Calu3 (cell line): ENCODE measurements at regions of chr12 and their contacts with region 1.

Region 1: GRCh38 chr12:43762596-43762995 is 3.8 kb downstream of the IRAK4 start:
- DNase-seq: no peak
- H3K4me3 Mint-ChIP-seq: no peak overlapping the region
- H3K27ac Mint-ChIP-seq: no peak overlapping the region
- H3K4me1 Mint-ChIP-seq: peaks cover 18% of the 10 kb centered on the region
- H3K27me3 Mint-ChIP-seq: no peaks in the 10 kb centered on the region
- CTCF ChIP-seq: no peak

Region 2: GRCh38 chr12:43795716-43796288 is 33.2 kb after region 1 on chr12:
- CTCF ChIA-PET with region 1: no interaction called
- intact Hi-C with region 1: loop called (anchors 5 kb)
- DNase-seq: no peak
- H3K4me3 Mint-ChIP-seq: no peak overlapping the region
- H3K27ac Mint-ChIP-seq: no peak overlapping the region
- H3K4me1 Mint-ChIP-seq: no peaks in the 10 kb centered on the region
- H3K27me3 Mint-ChIP-seq: no peaks in the 10 kb centered on the region
- CTCF ChIP-seq: no peak

Region 3: DNA sequence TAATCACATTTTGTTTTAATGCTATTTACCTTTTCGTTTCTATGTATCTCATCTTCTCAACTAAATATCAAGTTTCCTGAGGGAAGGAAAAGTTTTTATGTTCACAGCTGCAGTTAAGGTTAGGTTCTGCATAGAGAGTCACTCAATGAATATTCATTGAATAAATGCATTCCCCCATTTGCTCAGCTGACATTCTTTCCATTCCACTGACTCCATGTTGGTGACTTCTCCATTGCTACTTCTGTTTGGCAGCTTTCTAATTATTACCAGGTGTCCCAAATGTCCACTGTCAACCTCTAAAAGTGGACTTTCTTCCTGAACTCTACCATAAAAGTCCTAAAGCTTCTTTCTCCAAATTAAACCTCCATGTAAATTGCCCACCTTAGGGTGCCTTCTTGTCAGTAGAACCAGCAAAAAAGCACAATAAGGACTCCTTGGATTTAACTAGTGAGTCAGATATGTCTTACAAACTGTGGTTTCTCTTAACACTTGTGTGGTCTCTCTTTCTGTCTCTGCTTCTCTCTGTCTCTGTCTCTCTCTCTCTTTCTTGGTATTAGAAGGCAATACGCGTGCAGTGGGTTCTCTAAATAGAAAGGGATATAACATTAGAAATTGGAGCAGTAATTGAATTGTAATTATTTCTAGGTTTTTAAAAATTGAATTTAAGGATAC is 159.2 kb after region 1 on chr12:
- CTCF ChIA-PET with region 1: no interaction called
- intact Hi-C with region 1: no loop called
- DNase-seq: no peak
- H3K4me3 Mint-ChIP-seq: no peak overlapping the region
- H3K27ac Mint-ChIP-seq: no peak overlapping the region
- H3K4me1 Mint-ChIP-seq: no peaks in the 10 kb centered on the region
- H3K27me3 Mint-ChIP-seq: no peaks in the 10 kb centered on the region
- CTCF ChIP-seq: no peak

Region 4: GRCh38 chr12:44544018-44544417 is 781.4 kb after region 1 on chr12:
- CTCF ChIA-PET with region 1: no interaction called
- intact Hi-C with region 1: no loop called
- DNase-seq: no peak
- H3K4me3 Mint-ChIP-seq: no peak overlapping the region
- H3K27ac Mint-ChIP-seq: no peak overlapping the region
- H3K4me1 Mint-ChIP-seq: no peaks in the 10 kb centered on the region
- H3K27me3 Mint-ChIP-seq: no peaks in the 10 kb centered on the region
- CTCF ChIP-seq: no peak